ENCODE measurements at regions of chr12 and their contacts with region 1.

Region 1: GRCh38 chr12:85866986-85867776 is 6.9 kb upstream of the NTS start:
- DNase-seq: no peak

Region 2: DNA sequence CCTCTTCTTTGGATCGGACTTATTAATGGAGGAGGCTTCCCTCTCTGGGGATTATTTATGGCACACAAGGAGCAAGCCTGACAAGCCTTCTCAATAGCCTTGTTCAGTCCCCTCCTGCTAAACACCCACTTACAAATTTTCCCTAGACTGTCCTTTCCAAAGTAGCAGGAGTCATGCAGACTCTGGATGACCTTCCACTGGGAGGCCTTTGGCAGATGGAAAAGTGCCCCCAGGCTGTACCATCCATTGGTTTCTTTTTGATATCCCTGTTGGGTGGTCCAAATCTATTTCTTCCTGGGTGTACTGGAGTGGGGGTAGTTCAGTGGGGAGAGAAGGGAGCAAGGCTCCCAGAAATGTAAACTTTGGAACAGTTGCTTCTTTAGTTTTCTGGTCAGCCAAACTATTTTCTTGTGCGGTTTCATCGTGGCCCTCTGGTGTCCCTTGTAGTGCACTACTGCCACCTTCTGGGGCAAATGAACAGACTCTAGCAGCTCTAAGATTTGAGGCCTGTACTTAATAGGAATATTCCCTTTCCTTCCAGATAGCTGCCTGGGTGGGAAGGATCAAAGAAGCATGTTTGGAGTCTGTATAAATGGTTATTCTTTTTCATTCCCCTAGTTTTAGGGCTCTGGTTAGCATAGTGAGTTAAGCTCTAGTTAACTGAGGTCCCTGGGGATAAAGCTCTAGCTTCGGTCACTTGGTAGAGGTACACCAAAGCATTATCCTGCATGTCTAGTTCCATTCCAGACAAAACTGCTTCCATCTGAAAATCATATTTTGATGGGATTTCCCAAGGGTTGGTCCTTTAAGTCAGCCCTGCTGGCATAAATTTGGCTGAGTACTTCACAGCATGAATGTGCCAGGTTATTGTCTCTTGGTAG is 1364.0 kb before region 1 on chr12:
- intact Hi-C with region 1: loop called in 1 of 2 experiments (anchors 10 kb)
- DNase-seq: peak; percentile 76

Region 3: DNA sequence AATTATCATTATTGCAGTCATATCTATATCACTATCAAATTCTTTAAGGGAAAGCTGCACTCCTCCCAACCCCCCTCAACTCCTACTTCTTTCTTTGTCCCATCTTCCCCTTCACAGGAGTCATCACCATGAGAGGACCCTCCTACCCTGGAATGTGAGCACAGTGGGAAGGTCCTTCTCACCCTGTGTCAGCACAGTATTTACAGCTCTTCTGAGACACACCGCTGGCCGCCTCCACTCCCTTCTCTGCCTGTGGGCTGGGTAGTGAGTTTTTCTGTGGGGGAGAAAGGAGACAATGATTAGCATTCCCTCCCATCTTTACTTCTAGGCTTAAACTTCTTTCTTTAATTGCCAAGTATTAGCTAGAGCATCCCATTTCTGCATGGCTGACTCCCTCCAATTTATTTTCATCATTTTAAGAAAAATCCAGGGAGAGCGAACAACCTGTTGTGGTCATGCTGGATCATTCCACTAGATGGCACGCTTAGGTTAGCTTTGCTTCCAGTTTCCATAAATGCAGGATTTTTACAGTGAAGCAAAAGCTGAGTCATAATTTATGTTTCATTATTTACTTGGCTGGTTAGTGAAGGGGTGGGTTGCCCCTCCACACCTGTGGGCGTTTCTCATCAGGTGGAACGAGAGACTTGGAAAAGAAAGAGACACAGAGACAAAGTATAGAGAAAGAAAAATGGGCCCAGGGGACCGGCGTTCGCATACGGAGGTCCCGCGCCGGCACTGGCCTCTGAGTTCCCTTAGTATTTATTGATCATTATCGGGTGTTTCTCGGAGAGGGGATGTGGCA is 398.6 kb before region 1 on chr12:
- intact Hi-C with region 1: loop called in 1 of 2 experiments (anchors 5 kb)
- DNase-seq: peak; percentile 61

Region 4: DNA sequence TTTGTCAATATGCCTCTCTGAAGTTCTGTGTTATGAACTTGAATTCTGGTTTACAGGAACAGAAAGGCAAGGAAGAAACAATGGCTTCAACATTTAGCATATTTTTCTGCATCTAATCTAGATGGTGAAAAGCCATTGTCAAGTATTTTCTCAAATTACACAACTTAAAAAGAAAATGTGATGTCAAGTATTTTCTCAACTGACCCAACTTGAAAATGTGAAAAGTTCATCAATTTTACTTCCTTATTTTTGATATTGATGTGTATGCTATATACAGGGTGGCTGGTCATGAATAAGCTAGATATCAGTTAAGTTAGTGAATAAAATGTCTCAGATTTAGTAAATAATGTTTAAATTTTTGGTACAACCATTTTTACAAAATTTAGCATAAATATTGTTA is 390.4 kb before region 1 on chr12:
- intact Hi-C with region 1: loop called in 1 of 2 experiments (anchors 5 kb)
- DNase-seq: no peak

Region 5: GRCh38 chr12:85575120-85576096 is 291.8 kb before region 1 on chr12:
- intact Hi-C with region 1: loop called (anchors 5 to 10 kb)
- DNase-seq: no peak

Region 6: DNA sequence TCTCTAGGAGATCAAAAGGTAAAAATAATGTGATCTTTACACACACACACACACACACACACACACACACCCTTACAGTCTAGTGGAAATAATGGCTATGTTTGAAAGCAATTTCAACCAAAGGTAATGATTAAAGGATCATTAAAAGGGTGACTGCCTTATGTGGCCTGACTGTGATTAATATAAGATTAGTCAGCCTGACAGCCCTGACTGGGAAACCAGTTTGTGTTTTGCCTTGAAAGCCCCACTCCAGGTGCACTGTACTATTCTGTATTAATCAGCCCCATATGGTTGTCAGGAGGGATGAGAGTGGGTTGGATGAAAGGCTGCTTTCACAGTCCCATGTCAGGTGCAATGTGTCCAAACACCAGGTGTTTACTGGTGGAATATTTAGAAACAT is 41.4 kb before region 1 on chr12:
- intact Hi-C with region 1: no loop called
- DNase-seq: no peak

Measured in posterior vena cava (tissue), 2 donors.